ENCODE measurements at regions of chr10 and their contacts with region 1.

Region 1: GRCh38 chr10:36349445-36350078 is 707.5 kb upstream of the FZD8 start:
- DNase-seq: peak; percentile 92
- H3K4me3 ChIP-seq: peak overlapping the region in 2 of 3 experiments; percentile 2 to 19
- H3K27ac ChIP-seq: peak overlapping the region; percentile 79
- H3K4me1 ChIP-seq: peaks cover 29% of the 10 kb centered on the region
- H3K27me3 ChIP-seq: no peaks in the 10 kb centered on the region
- CTCF ChIP-seq: peak in 1 of 2 donors; percentile 19

Region 2: GRCh38 chr10:36087006-36088005 is 262.3 kb before region 1 on chr10:
- CTCF ChIA-PET with region 1: no interaction called
- dilution Hi-C with region 1: no loop called
- in situ Hi-C with region 1: no loop called
- intact Hi-C with region 1: no loop called
- DNase-seq: peak; percentile 15
- H3K4me3 ChIP-seq: no peak overlapping the region
- H3K27ac ChIP-seq: no peak overlapping the region
- H3K4me1 ChIP-seq: no peaks in the 10 kb centered on the region
- H3K27me3 ChIP-seq: no peaks in the 10 kb centered on the region
- CTCF ChIP-seq: no peak

Region 3: DNA sequence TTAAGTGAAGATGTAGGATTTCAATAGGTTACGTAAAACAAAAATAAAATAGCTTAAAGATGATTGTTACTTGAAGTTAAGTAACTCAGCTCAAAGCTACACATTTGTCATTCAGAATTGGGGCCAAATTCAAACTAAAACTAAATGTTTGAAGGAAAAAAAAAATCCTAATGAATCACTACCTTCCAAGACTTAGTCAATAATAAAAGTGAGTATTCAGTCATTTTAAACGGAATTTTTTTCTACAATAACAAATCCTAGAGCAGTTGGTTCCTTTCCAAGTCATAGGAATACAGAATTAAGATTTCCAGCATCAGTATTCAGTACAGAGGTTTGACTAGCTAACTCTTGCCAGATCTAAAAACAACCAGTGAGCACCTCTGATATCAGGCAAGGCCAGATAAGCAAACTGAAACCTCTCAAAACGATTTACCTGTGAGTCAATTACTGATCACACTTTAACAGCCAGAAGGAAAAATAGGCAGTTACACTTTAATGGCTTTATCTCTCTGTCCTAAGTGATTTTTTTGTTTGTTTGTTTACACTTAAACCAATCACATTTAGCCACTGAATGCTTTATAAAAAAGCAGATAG is 106.1 kb after region 1 on chr10:
- CTCF ChIA-PET with region 1: no interaction called
- dilution Hi-C with region 1: no loop called
- in situ Hi-C with region 1: no loop called
- intact Hi-C with region 1: no loop called
- DNase-seq: no peak
- H3K4me3 ChIP-seq: no peak overlapping the region
- H3K27ac ChIP-seq: no peak overlapping the region
- H3K4me1 ChIP-seq: no peaks in the 10 kb centered on the region
- H3K27me3 ChIP-seq: no peaks in the 10 kb centered on the region
- CTCF ChIP-seq: no peak

Region 4: DNA sequence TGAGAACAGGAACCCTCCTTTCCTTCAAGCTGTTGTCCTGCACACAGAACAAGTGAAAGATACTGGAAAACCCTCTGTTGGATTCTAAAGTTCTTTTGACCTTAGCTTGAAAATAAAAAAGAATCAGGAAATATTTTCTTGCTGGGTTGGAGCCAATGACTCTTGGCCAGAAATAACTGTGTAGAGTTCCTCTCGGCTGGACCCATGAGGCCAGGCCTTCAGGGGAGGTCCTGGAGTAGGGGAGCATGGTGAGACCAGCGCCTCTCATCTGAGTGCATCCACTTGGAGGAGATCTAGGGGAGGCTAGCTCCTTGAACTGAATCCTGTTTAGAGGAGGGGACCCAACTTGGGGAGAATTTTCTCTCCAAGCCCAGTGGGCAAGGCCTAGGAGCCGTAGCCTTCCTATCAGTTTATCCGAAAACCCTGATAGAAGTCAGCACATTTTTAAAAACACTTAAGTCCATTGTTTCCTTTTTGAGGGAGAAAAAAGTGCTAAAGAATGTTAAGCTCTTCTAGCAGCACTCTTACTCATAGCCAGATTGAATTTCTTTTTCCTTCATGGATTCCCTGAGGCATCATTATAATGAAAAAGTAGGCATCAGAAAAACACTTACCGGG is 140.2 kb after region 1 on chr10:
- CTCF ChIA-PET with region 1: no interaction called
- dilution Hi-C with region 1: no loop called
- in situ Hi-C with region 1: no loop called
- intact Hi-C with region 1: loop called (anchors 5 kb)
- DNase-seq: peak; percentile 48
- H3K4me3 ChIP-seq: no peak overlapping the region
- H3K27ac ChIP-seq: peak overlapping the region; percentile 58
- H3K4me1 ChIP-seq: peaks cover 33% of the 10 kb centered on the region
- H3K27me3 ChIP-seq: no peaks in the 10 kb centered on the region
- CTCF ChIP-seq: no peak